GM12878 (cell line): ENCODE measurements at regions of chr21 and their contacts with region 1.

Region 1: DNA sequence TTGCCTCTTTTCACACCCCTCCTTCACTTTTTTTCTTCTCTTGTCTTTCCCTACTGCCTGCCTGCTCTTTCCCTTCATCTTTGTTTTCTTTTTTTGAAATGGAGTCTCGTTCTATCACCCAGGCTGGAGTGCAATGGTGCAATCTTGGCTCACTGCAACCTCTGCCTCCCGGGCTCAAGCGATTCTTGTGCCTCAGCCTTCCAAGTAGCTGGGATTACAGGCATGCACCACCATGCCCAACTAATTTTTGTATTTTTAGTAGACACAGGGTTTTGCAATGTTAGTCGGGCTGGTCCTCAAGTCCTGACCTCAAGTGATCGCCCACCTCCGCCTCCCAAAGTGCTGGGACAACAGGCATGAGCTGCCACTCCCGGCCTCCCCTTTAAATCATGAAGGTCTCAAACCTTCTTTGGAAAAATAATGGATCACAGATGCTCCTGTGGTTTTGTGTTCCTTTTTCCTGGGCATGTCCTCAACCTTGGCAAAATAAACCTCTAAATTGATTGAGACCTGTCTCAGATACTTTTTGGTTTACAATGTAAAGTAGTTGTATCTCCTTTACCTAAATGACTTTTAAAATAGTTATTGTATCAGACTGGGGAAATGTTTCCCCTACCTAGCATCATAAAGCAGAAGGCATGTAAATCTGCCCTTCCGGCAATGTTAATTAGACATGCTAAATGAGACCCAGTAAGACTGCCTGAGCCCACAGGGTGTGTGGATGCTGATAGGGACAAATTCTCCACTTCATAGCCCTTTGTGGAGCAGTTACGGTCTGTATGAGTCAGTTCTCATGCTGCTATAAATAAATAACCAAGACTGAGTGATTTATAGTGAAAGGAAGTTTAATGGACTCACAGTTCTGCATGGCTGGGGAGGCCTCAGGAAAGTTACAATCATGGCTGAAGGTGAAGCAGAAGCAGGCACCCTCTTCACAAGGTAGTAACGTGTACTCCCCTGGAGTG is 27.7 kb downstream of the CBR1 start:
- DNase-seq: peak; percentile 55
- ATAC-seq: peak; percentile 96
- H3K4me3 ChIP-seq: no peak overlapping the region
- H3K27ac ChIP-seq: no peak overlapping the region
- H3K4me1 ChIP-seq: peaks cover 4% of the 10 kb centered on the region; the same call in 1 of the 2 replicates
- H3K27me3 ChIP-seq: no peaks in the 10 kb centered on the region
- CTCF ChIP-seq: no peak
- EP300 ChIP-seq: no peak
- POLR2A ChIP-seq: no peak
- RAD21 ChIP-seq: no peak

Region 2: GRCh38 chr21:36060159-36060921 is 37.2 kb before region 1 on chr21 and contains the start of gene SETD4:
- CTCF ChIA-PET with region 1: interaction called, 6 read pairs
- POLR2A ChIA-PET with region 1: no interaction called
- RAD21 ChIA-PET with region 1: interaction called, 6 read pairs
- SMC1A ChIA-PET with region 1: interaction called, 9 read pairs
- in situ Hi-C with region 1: no loop called
- intact Hi-C with region 1: loop called (anchors 2 kb)
- DNase-seq: peak; percentile 73
- ATAC-seq: peak; percentile 94
- H3K4me3 ChIP-seq: peak within 1 kb of the TSS; percentile 87
- H3K27ac ChIP-seq: peak within 1 kb of the TSS; percentile 79
- H3K4me1 ChIP-seq: no peaks in the 10 kb centered on the region
- H3K27me3 ChIP-seq: no peaks in the 10 kb centered on the region
- CTCF ChIP-seq: no peak
- EP300 ChIP-seq: no peak
- POLR2A ChIP-seq: peak; percentile 90
- RAD21 ChIP-seq: no peak
- polyA plus RNA-seq, gene SETD4: 26.2 to 37.0 TPM